HAP-1 (cell line): ENCODE measurements at regions of chr13 and their contacts with region 1.

Region 1: GRCh38 chr13:24220086-24220703 is 59.7 kb downstream of the SPATA13 start:
- DNase-seq: peak; percentile 70
- H3K4me3 ChIP-seq: no peak overlapping the region
- H3K4me1 ChIP-seq: peaks cover 4% of the 10 kb centered on the region
- H3K27me3 ChIP-seq: no peaks in the 10 kb centered on the region

Region 2: GRCh38 chr13:23321535-23322241 is 898.5 kb before region 1 on chr13:
- in situ Hi-C with region 1: no loop called
- DNase-seq: no peak
- H3K4me3 ChIP-seq: no peak overlapping the region
- H3K4me1 ChIP-seq: peaks cover 6% of the 10 kb centered on the region; the same call in 1 of the 2 replicates
- H3K27me3 ChIP-seq: no peaks in the 10 kb centered on the region

Region 3: DNA sequence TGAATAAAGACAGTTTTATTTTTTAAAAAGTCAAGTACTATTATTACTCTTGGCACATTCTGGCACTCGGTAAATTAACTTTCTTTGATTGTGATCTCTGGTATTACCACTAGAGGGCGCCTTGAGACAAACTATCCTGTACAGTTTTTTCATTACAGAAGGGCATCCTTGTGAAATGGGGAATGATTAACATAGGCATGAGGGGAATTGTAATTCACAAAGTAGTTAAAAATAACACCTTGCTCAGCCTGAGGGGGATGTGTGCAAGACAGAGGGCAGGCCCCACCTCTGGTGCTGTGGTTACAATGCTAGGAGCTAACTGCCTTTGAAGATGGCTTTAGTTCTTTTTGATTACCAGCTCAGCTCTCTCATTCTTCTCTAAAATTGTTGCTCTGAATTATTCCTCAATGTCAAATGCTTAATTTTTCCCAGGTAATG is 298.7 kb before region 1 on chr13:
- in situ Hi-C with region 1: loop called (anchors 10 kb)
- DNase-seq: peak; percentile 51 to 67
- H3K4me3 ChIP-seq: no peak overlapping the region
- H3K4me1 ChIP-seq: no peaks in the 10 kb centered on the region
- H3K27me3 ChIP-seq: peaks cover 22% of the 10 kb centered on the region

Region 4: GRCh38 chr13:24020375-24020830 is 199.8 kb before region 1 on chr13:
- in situ Hi-C with region 1: loop called (anchors 5 kb)
- DNase-seq: peak; percentile 53 to 69
- H3K4me3 ChIP-seq: no peak overlapping the region
- H3K4me1 ChIP-seq: no peaks in the 10 kb centered on the region
- H3K27me3 ChIP-seq: no peaks in the 10 kb centered on the region